Dorsolateral prefrontal cortex (tissue), 120 donors: ENCODE measurements at regions of chr19 and their contacts with region 1.

Region 1: GRCh38 chr19:52189735-52190486 is at the start of gene PPP2R1A:
- DNase-seq: peak; percentile 98 to 100 (median 100)
- H3K4me3 ChIP-seq: peak within 1 kb of the TSS; percentile 57 to 98 (median 87)
- H3K27ac ChIP-seq: peak within 1 kb of the TSS; percentile 88 to 100 (median 98)
- H3K27me3 ChIP-seq: no peaks in the 10 kb centered on the region
- CTCF ChIP-seq: peak in 11 of 56 donors; percentile 3 to 42 (median 11)
- total RNA-seq, gene PPP2R1A: 220 to 524 (median 400) TPM

Region 2: GRCh38 chr19:51887522-51888498 is 302.1 kb before region 1 on chr19 and contains the start of gene ZNF577:
- intact Hi-C with region 1: no loop called
- DNase-seq: peak; percentile 77 to 92 (median 88)
- H3K4me3 ChIP-seq: peak within 1 kb of the TSS; percentile 24 to 76 (median 66)
- H3K27ac ChIP-seq: peak within 1 kb of the TSS in 37 of 59 donors; percentile 4 to 85 (median 60)
- H3K27me3 ChIP-seq: no peaks in the 10 kb centered on the region
- CTCF ChIP-seq: peak in 10 of 56 donors; percentile 4 to 33 (median 11)
- total RNA-seq, gene ZNF577: 18.9 to 73.4 (median 37.6) TPM

Region 3: GRCh38 chr19:52171321-52172169 is 18.4 kb before region 1 on chr19 and contains the start of gene ZNF836:
- intact Hi-C with region 1: loop called in 1 of 2 experiments (anchors 1 kb)
- DNase-seq: peak; percentile 66 to 90 (median 76)
- H3K4me3 ChIP-seq: peak within 1 kb of the TSS; percentile 67 to 99 (median 92)
- H3K27ac ChIP-seq: peak within 1 kb of the TSS in 56 of 59 donors; percentile 0 to 91 (median 74)
- H3K27me3 ChIP-seq: no peaks in the 10 kb centered on the region
- CTCF ChIP-seq: no peak
- total RNA-seq, gene ZNF836: 10.9 to 29.4 (median 18.2) TPM

Region 4: DNA sequence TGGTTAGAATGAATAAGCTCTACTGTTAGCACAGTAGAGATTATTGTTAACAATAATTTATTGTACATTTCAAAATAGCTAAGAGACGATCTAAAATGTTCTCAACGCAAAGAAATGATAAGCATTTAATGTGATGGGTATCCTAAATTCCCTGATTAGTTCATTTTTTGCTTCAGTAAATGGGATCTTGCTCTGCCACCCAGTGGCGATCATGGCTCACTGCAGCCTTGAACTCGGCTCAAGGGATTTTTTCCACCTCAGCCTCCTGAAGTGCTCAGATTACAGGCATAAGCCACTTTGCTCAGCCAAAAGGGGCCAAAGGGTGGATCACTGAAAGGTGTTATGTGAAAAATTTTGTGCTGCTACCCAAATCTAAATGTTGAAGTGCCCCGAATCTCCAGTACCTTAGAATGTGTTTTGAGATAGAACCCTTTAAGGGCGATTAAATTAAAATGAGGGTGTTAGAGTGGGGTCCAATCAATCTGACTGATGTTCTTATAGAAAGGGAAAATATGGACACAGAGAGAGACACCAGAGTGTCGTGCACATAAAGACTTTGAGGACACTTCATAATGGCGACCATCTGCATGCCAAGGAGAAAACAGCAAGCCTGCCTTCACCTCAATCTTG is 48.0 kb after region 1 on chr19:
- intact Hi-C with region 1: loop called (anchors 5 to 10 kb)
- DNase-seq: peak in 9 of 10 donors; percentile 26 to 70 (median 55)
- H3K4me3 ChIP-seq: peak overlapping the region in 2 of 59 donors; percentile 1 to 20
- H3K27ac ChIP-seq: no peak overlapping the region
- H3K27me3 ChIP-seq: no peaks in the 10 kb centered on the region
- CTCF ChIP-seq: peak; percentile 82 to 98 (median 92)

Region 5: DNA sequence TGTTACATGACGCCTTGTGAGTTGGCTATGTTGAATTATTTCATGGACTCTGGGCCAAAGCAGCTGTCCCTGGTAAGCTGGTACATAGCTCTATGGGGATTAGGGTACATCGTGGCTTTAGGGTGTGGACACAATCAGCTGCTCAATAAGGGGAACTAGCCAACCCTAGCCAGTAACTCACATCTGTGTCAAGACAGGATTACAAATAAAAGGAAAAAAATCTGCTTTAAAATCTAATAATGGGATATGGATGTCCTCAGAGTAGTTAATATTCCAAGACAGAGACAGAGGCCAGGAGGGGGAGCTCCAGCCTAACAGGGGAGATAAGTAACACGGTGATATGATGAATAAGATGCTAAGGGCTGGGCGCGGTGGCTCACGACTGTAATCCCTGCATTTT is 58.3 kb after region 1 on chr19:
- intact Hi-C with region 1: no loop called
- DNase-seq: peak in 2 of 10 donors; percentile 46 to 47
- H3K4me3 ChIP-seq: no peak overlapping the region
- H3K27ac ChIP-seq: no peak overlapping the region
- H3K27me3 ChIP-seq: no peaks in the 10 kb centered on the region
- CTCF ChIP-seq: peak in 46 of 56 donors; percentile 19 to 67 (median 34)